Activated T-helper 1 cell treated with anti-CD3 and anti-CD28 coated beads, Interleukin-12 subunit alpha, Interleukin-12 subunit beta, Interleukin-2, Interleukin-4 antibody, amounts not matched to agents 30 ng/mL and 10 ng/mL and 1 ng/mL, durations not matched to agents 14 hours and 24 hours and 36 hours (primary cell): ENCODE measurements at regions of chr12 and their contacts with region 1.

Region 1: GRCh38 chr12:76083904-76084862 is at the start of gene NAP1L1:
- DNase-seq: peak; percentile 96
- H3K4me3 Mint-ChIP-seq: peak within 1 kb of the TSS; percentile 100
- H3K27ac Mint-ChIP-seq: peak within 1 kb of the TSS; percentile 100
- H3K4me1 Mint-ChIP-seq: peaks cover 62% of the 10 kb centered on the region
- H3K27me3 Mint-ChIP-seq: no peaks in the 10 kb centered on the region
- total RNA-seq, gene NAP1L1: 584 and 605 TPM in 2 replicates

Region 2: GRCh38 chr12:75390899-75391538 is 693.2 kb before region 1 on chr12 and contains the start of gene GLIPR1L2:
- intact Hi-C with region 1: loop called (anchors 2 kb)
- DNase-seq: peak; percentile 82
- H3K4me3 Mint-ChIP-seq: peak within 1 kb of the TSS; percentile 86
- H3K27ac Mint-ChIP-seq: peak within 1 kb of the TSS; percentile 79
- H3K4me1 Mint-ChIP-seq: peaks cover 39% of the 10 kb centered on the region
- H3K27me3 Mint-ChIP-seq: peaks cover 5% of the 10 kb centered on the region
- total RNA-seq, gene GLIPR1L2: not detected in 2 replicates

Region 3: GRCh38 chr12:75641031-75641780 is 443.0 kb before region 1 on chr12:
- intact Hi-C with region 1: loop called (anchors 1 kb)
- DNase-seq: peak; percentile 32
- H3K4me3 Mint-ChIP-seq: peak overlapping the region; percentile 19
- H3K27ac Mint-ChIP-seq: peak overlapping the region; percentile 89
- H3K4me1 Mint-ChIP-seq: peaks cover 34% of the 10 kb centered on the region
- H3K27me3 Mint-ChIP-seq: no peaks in the 10 kb centered on the region

Region 4: DNA sequence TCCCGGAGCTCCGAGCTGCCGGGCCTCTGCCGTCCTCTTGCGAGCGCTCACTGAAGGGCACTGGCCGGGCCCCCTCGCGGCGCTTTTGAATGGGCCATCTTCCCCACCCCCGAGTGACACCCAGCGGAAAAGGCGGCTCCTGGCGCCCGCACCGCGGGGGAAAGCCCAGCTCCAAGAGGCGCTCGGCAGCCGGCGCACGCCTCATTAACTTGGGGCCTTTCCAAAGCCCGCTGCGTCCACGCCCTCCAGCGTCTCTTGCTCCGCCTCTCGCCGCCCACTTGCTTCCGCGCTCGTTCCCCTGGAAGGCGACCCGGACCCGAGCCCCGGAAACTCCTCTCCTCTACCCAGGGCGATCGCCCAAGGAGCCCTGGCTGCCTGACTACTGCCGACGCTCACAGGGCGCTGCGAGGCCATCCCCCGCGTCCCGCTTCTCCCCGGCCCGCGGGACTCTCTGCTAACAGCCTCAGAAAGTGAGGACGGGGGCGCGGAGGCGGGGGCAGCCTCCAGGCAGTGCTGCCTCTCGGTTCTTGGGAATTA is 52.6 kb before region 1 on chr12 and contains the start of gene PHLDA1:
- intact Hi-C with region 1: loop called (anchors 1 kb)
- DNase-seq: peak; percentile 95
- H3K4me3 Mint-ChIP-seq: peak within 1 kb of the TSS; percentile 99
- H3K27ac Mint-ChIP-seq: peak within 1 kb of the TSS; percentile 99
- H3K4me1 Mint-ChIP-seq: peaks cover 34% of the 10 kb centered on the region
- H3K27me3 Mint-ChIP-seq: peaks cover 3% of the 10 kb centered on the region
- total RNA-seq, gene PHLDA1: 88.9 and 91.5 TPM in 2 replicates

Region 5: DNA sequence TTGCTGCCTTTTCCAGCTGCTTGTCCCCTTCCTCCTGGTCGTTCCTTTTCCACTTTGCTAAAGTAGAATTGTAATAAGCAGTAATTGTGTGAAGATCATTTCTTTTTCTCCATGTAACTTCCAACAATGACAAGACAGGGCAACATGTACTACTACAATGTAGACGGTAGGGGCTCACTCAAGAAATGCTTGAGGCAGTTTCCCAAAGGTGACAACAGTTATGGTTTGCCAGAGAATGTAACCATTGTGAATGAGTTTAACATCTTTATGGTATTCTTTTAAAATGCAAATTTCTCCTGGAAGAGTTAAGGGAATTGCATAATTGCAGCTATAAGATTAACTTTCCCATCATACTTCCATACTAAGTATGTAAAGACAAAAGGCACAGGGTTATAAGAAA is 28.8 kb before region 1 on chr12:
- intact Hi-C with region 1: no loop called
- DNase-seq: no peak
- H3K4me3 Mint-ChIP-seq: no peak overlapping the region
- H3K27ac Mint-ChIP-seq: no peak overlapping the region
- H3K4me1 Mint-ChIP-seq: peaks cover 15% of the 10 kb centered on the region
- H3K27me3 Mint-ChIP-seq: no peaks in the 10 kb centered on the region

Region 6: DNA sequence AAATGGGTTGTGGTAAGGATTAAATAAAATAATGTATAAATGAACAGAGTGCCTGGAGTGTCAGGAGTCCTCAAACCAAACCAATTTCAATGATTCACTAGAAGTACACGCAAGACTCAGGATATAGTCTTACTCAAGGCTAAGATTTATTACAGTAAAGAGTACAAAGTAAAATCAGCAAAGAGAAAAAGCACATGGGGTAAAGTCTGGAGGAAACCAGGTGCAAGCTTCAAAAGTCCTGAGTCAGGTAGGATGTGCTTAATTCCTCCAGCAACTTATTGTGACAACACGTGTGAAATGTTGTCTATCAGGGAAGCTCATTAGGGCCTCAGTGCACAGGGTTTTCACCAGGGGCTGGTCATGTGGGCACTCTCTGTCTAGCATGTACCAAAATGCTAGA is 106.1 kb after region 1 on chr12:
- intact Hi-C with region 1: no loop called
- DNase-seq: no peak
- H3K4me3 Mint-ChIP-seq: no peak overlapping the region
- H3K27ac Mint-ChIP-seq: no peak overlapping the region
- H3K4me1 Mint-ChIP-seq: no peaks in the 10 kb centered on the region
- H3K27me3 Mint-ChIP-seq: peaks cover 21% of the 10 kb centered on the region

Region 7: GRCh38 chr12:76277480-76277879 is 193.3 kb after region 1 on chr12:
- intact Hi-C with region 1: loop called (anchors 1 kb)
- DNase-seq: no peak
- H3K4me3 Mint-ChIP-seq: no peak overlapping the region
- H3K27ac Mint-ChIP-seq: no peak overlapping the region
- H3K4me1 Mint-ChIP-seq: peaks cover 15% of the 10 kb centered on the region
- H3K27me3 Mint-ChIP-seq: peaks cover 6% of the 10 kb centered on the region

Region 8: DNA sequence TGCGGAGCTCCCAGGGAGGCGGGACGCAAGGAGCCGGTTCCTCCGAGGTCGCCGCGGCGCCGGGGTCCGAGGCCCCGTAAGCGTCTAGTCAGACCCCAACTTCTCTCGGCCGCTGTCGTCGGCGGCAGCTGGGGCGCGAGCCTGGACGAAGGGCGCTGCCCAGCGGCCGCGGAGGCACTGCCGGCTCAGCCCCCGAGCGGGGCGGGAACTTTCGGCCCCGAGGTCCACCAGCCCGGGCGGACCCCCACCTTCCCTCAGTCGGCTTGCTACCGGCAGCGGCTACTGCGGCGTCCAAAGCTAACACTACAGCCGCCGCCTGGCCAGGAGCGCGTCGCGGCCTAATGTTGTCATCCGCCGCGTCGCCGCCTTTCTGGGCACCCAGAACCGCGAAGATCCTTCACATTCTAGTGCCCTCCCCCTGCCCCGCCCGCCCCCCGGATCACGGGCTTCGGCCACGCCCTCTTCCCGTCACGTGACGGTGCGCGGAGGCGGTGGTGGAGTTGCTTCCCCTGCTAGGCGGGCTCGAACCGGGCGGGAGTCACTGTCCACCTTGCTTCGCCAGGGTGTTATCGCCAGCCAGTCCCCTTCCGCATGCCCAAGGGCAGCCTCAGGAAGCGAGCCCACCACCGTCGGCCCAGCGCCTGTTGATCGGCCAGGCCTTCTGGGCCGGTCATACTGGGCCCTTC is 475.4 kb after region 1 on chr12 and contains the start of gene OSBPL8:
- intact Hi-C with region 1: loop called (anchors 1 kb)
- DNase-seq: peak; percentile 91
- H3K4me3 Mint-ChIP-seq: peak within 1 kb of the TSS; percentile 94
- H3K27ac Mint-ChIP-seq: peak within 1 kb of the TSS; percentile 98
- H3K4me1 Mint-ChIP-seq: peaks cover 49% of the 10 kb centered on the region
- H3K27me3 Mint-ChIP-seq: no peaks in the 10 kb centered on the region
- total RNA-seq, gene OSBPL8: 86.9 and 95.9 TPM in 2 replicates

Region 9: DNA sequence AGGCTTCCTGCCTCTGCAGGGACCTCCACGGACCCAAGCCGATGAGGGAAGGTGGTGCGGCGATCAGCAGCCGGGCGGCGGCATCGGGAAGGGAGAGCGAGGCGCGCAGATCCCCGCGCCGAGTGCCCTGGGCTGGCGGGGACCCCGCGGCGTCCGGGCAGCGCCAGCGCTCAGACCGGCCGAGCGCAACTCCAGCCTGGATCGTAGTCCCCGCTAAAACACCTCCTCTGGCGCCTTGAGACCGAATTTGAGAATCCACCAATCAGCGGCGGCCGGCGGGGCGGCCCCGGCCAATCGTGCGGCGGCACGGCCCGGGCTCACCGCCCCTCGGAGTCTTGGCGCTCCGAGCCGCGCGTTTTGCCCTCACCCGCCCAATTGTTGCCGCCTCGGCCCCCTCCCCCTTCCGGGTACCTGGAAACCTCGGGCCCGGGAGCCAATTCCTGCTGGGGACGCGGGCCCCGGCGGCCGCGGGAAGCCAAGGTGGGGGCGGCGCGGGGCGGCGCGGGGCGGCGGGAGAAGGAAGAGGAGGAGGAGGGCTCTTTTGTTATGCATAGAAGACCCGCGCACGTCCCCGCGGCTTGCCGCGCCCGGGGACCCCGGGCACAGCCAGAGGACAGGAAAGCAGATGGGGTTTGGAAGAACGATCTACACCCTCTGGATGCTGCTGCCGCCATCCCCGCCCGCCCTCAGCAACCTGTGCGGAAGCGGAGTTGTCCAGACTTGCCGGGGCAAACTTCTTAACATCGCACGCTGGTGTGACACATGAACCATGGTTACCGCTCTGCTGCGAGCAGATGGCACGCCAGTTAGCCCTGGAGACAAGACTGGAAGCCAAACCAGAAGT is 981.4 kb after region 1 on chr12 and contains the start of gene E2F7:
- intact Hi-C with region 1: loop called (anchors 2 kb)
- DNase-seq: peak; percentile 87
- H3K4me3 Mint-ChIP-seq: peak within 1 kb of the TSS; percentile 94
- H3K27ac Mint-ChIP-seq: peak within 1 kb of the TSS; percentile 73
- H3K4me1 Mint-ChIP-seq: peaks cover 42% of the 10 kb centered on the region
- H3K27me3 Mint-ChIP-seq: peaks cover 12% of the 10 kb centered on the region
- total RNA-seq, gene E2F7: 16.6 and 16.9 TPM in 2 replicates